ENCODE measurements at regions of chr1 and their contacts with region 1.

Region 1: GRCh38 chr1:156383023-156383422 is 14.0 kb downstream of the RHBG start:
- DNase-seq: peak; percentile 74
- H3K4me3 Mint-ChIP-seq: no peak overlapping the region
- H3K27ac Mint-ChIP-seq: no peak overlapping the region
- H3K4me1 Mint-ChIP-seq: peaks cover 4% of the 10 kb centered on the region
- H3K27me3 Mint-ChIP-seq: peaks cover 10% of the 10 kb centered on the region

Region 2: GRCh38 chr1:156198831-156199349 is 184.1 kb before region 1 on chr1:
- CTCF ChIA-PET with region 1: no interaction called
- POLR2A ChIA-PET with region 1: no interaction called
- intact Hi-C with region 1: no loop called
- DNase-seq: peak; percentile 73
- H3K4me3 Mint-ChIP-seq: no peak overlapping the region
- H3K27ac Mint-ChIP-seq: no peak overlapping the region
- H3K4me1 Mint-ChIP-seq: peaks cover 64% of the 10 kb centered on the region
- H3K27me3 Mint-ChIP-seq: no peaks in the 10 kb centered on the region

Region 3: GRCh38 chr1:156338180-156338973 is 44.6 kb before region 1 on chr1 and contains the starts of genes CCT3 and TSACC:
- CTCF ChIA-PET with region 1: interaction called, 11 read pairs
- POLR2A ChIA-PET with region 1: no interaction called
- intact Hi-C with region 1: no loop called
- DNase-seq: peak; percentile 99
- H3K4me3 Mint-ChIP-seq: peak within 1 kb of the TSS; percentile 90
- H3K27ac Mint-ChIP-seq: peak within 1 kb of the TSS; percentile 95
- H3K4me1 Mint-ChIP-seq: peaks cover 27% of the 10 kb centered on the region
- H3K27me3 Mint-ChIP-seq: no peaks in the 10 kb centered on the region
- total RNA-seq, gene CCT3: 344 to 356 TPM
- total RNA-seq, gene TSACC: not detected

Region 4: GRCh38 chr1:156394835-156395461 is 11.9 kb after region 1 on chr1:
- CTCF ChIA-PET with region 1: interaction called, 17 read pairs
- POLR2A ChIA-PET with region 1: no interaction called
- intact Hi-C with region 1: no loop called
- DNase-seq: no peak
- H3K4me3 Mint-ChIP-seq: no peak overlapping the region
- H3K27ac Mint-ChIP-seq: no peak overlapping the region
- H3K4me1 Mint-ChIP-seq: no peaks in the 10 kb centered on the region
- H3K27me3 Mint-ChIP-seq: peaks cover 2% of the 10 kb centered on the region

Region 5: GRCh38 chr1:156429313-156430060 is 46.5 kb after region 1 on chr1:
- CTCF ChIA-PET with region 1: interaction called, 69 read pairs
- POLR2A ChIA-PET with region 1: no interaction called
- intact Hi-C with region 1: no loop called
- DNase-seq: no peak
- H3K4me3 Mint-ChIP-seq: no peak overlapping the region
- H3K27ac Mint-ChIP-seq: no peak overlapping the region
- H3K4me1 Mint-ChIP-seq: peaks cover 10% of the 10 kb centered on the region
- H3K27me3 Mint-ChIP-seq: peaks cover 79% of the 10 kb centered on the region

Region 6: GRCh38 chr1:156451505-156452160 is 68.6 kb after region 1 on chr1:
- CTCF ChIA-PET with region 1: interaction called, 491 read pairs
- POLR2A ChIA-PET with region 1: interaction called, 4 read pairs
- intact Hi-C with region 1: no loop called
- DNase-seq: no peak
- H3K4me3 Mint-ChIP-seq: no peak overlapping the region
- H3K27ac Mint-ChIP-seq: no peak overlapping the region
- H3K4me1 Mint-ChIP-seq: peaks cover 29% of the 10 kb centered on the region
- H3K27me3 Mint-ChIP-seq: peaks cover 10% of the 10 kb centered on the region

Region 7: GRCh38 chr1:156489166-156489934 is 106.3 kb after region 1 on chr1:
- CTCF ChIA-PET with region 1: interaction called, 19 read pairs
- POLR2A ChIA-PET with region 1: no interaction called
- intact Hi-C with region 1: no loop called
- DNase-seq: peak; percentile 72
- H3K4me3 Mint-ChIP-seq: peak overlapping the region; percentile 56
- H3K27ac Mint-ChIP-seq: peak overlapping the region; percentile 88
- H3K4me1 Mint-ChIP-seq: peaks cover 88% of the 10 kb centered on the region
- H3K27me3 Mint-ChIP-seq: no peaks in the 10 kb centered on the region

Region 8: DNA sequence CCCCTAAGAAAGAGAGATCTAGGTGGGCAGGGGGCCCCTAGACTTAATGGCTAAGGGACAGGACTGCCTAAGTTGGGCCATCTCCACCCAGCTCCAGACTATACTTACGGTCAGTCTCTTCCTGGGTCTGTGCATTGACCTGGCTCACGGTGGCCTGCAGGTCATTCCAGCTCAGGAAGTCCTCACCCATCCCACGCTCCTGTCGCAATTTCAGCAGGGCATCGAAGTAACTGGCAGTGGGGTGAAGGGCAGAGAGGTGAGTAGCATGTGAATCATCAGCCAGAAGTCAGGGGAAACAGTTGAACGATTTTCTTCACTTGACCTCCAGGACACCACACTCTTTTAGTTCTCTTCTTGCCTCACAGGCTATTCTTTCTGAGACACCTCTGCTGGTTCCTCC is 168.8 kb after region 1 on chr1:
- CTCF ChIA-PET with region 1: no interaction called
- POLR2A ChIA-PET with region 1: no interaction called
- intact Hi-C with region 1: no loop called
- DNase-seq: no peak
- H3K4me3 Mint-ChIP-seq: no peak overlapping the region
- H3K27ac Mint-ChIP-seq: no peak overlapping the region
- H3K4me1 Mint-ChIP-seq: peaks cover 2% of the 10 kb centered on the region
- H3K27me3 Mint-ChIP-seq: no peaks in the 10 kb centered on the region

Region 9: GRCh38 chr1:156608036-156608674 is 225.1 kb after region 1 on chr1:
- CTCF ChIA-PET with region 1: interaction called, 29 read pairs
- POLR2A ChIA-PET with region 1: no interaction called
- intact Hi-C with region 1: loop called (anchors 1 kb)
- DNase-seq: peak; percentile 66
- H3K4me3 Mint-ChIP-seq: no peak overlapping the region
- H3K27ac Mint-ChIP-seq: no peak overlapping the region
- H3K4me1 Mint-ChIP-seq: peaks cover 3% of the 10 kb centered on the region
- H3K27me3 Mint-ChIP-seq: peaks cover 9% of the 10 kb centered on the region

Region 10: GRCh38 chr1:156740679-156741612 is 357.9 kb after region 1 on chr1 and contains the start of gene MRPL24:
- CTCF ChIA-PET with region 1: no interaction called
- POLR2A ChIA-PET with region 1: no interaction called
- intact Hi-C with region 1: no loop called
- DNase-seq: peak; percentile 98
- H3K4me3 Mint-ChIP-seq: peak within 1 kb of the TSS; percentile 89
- H3K27ac Mint-ChIP-seq: peak within 1 kb of the TSS; percentile 95
- H3K4me1 Mint-ChIP-seq: peaks cover 47% of the 10 kb centered on the region
- H3K27me3 Mint-ChIP-seq: no peaks in the 10 kb centered on the region
- total RNA-seq, gene MRPL24: 105 to 106 TPM